ENCODE measurements at regions of chr15 and their contacts with region 1.

Region 1: DNA sequence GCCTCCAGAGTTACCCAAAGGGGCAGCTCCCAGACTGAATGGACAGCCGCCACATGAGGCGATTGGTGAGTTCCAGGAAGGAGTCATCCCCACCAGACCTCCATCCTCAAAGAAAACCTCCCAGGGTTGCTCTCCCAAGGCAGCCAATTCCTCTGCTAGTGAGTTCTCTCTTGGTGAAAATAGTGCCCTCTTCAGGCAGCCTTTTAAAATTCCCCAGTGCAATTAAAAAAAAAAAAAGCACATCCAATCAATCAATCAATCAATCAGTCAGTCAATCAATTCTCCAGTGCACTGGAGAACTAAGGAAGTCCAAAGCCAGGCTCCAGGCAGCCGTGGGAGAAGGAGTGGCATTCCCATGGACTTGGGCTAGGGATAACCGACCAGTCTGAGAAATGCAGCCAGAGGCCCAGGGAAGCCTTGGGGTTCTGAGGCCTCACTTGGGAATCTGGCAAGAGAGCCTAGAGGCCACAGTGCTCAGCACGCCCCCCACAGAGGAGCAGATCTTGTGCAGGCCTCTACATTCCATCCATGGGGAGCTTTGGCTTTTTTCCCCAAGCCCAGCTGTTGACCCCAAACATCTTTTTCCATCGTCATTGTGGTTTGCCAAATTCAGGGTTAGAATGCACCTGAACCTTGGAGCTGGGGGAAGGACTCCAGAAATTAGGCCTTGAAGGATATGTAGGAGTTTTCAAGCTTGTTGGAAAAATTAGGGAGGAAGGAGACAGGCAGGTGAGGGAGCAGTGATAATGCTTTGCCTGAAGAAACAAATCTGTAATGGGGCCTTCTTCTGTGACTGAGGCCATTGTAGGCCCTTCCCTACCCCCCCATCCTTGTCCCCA is 4.8 kb downstream of the PAQR5 start:
- DNase-seq: no peak
- ATAC-seq: no peak
- H3K4me3 ChIP-seq: no peak overlapping the region
- H3K27ac ChIP-seq: no peak overlapping the region
- H3K4me1 ChIP-seq: peaks cover 29% of the 10 kb centered on the region
- H3K27me3 ChIP-seq: peaks cover 7 to 24% of the 10 kb centered on the region in 2 experiments
- CTCF ChIP-seq: 0 out of 2 replicates have a peak, but pooled peaks have one; percentile 3
- EP300 ChIP-seq: no peak
- POLR2A ChIP-seq: no peak
- RAD21 ChIP-seq: no peak

Region 2: GRCh38 chr15:68783226-68784058 is 520.1 kb before region 1 on chr15:
- CTCF ChIA-PET with region 1: no interaction called
- POLR2A ChIA-PET with region 1: no interaction called
- in situ Hi-C with region 1: no loop called
- intact Hi-C with region 1: no loop called
- DNase-seq: peak; percentile 19
- ATAC-seq: peak; percentile 93
- H3K4me3 ChIP-seq: no peak overlapping the region
- H3K27ac ChIP-seq: no peak overlapping the region
- H3K4me1 ChIP-seq: no peaks in the 10 kb centered on the region
- H3K27me3 ChIP-seq: no peaks in the 10 kb centered on the region
- CTCF ChIP-seq: peak; percentile 73
- EP300 ChIP-seq: no peak
- POLR2A ChIP-seq: no peak
- RAD21 ChIP-seq: peak; percentile 62; the same call in 1 of the 2 replicates

Region 3: DNA sequence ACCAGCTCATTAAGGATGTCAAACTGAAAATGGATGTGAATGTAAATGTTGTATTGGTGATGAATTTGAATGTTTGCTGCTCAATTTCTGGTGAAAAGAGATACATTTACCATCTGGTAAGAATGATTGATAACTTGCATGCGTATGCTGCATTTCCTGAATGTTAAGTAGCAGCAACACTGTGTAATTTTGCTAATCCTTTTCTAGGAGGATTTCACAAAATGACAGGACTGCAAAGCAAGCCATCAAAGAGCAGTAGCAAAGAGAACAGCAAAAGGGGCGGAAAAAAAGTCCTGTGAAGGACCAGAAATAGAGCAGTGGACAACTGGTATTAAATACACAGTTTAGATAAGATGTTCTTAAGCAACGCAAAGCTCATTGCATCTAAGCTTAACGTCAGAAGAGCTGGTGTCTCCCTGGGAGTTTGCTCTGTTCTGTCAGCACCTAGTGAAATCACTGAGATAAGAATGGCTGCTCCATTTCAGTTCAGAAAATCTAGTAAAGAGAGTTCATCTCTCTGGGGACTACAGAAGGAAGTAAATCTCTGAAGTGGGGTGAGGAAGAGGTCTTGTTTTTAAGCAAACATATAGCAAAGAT is 28.4 kb before region 1 on chr15:
- CTCF ChIA-PET with region 1: no interaction called
- POLR2A ChIA-PET with region 1: no interaction called
- in situ Hi-C with region 1: no loop called
- intact Hi-C with region 1: loop called (anchors 1 kb)
- DNase-seq: no peak
- ATAC-seq: no peak
- H3K4me3 ChIP-seq: no peak overlapping the region
- H3K27ac ChIP-seq: no peak overlapping the region
- H3K4me1 ChIP-seq: peaks cover 26% of the 10 kb centered on the region
- H3K27me3 ChIP-seq: peaks cover 0 to 16% of the 10 kb centered on the region in 2 experiments; a peak in 2 of 5 replicates
- CTCF ChIP-seq: no peak
- EP300 ChIP-seq: no peak
- POLR2A ChIP-seq: no peak
- RAD21 ChIP-seq: no peak

Measured in HepG2 (cell line).